IMR-90 (cell line): ENCODE measurements at regions of chr11 and their contacts with region 1.

Region 1: DNA sequence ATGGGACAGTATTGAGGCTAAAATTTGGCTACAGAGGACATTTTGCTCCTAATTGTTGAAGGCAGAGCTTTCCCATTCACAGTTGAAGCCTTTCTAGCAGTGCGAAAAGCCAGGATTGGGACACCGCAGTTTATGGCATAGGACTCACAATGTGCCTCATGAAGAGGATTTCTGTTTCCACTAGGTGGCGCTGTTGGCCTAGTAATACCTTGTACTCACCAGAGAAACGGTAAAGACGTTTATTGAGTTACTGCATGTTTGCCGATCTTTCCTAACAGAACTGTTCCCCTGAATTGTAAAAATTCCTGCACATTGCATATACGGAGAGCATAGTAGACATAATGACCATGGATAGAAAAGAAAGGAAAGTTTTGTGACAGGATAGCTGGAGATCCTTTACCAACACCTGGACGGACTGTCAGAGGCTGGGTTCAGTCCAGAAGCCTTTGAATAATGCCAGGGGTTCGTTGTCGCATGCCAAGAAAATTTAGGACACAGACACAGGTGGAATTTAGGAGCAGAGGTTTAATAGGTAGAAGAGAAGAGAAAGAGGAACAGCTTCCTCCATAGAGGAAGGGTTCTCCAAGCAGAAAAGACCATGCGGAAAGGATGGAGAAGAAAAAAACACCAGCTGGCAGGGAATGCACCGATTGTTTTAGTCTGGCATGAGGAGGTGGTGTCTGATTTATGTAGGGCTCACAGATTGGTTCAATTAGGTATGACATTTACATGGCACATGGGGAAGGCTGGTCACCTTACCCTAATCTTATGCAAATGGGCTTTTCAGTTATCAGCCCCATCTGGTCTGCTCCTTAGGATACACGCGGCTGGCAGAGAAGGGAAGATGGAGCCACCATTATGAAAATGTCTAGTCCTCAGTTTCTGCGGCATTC is 10.8 kb upstream of the OR51D1 start:
- DNase-seq: peak; percentile 79
- ATAC-seq: peak; percentile 90
- H3K4me3 ChIP-seq: no peak overlapping the region
- H3K27ac ChIP-seq: no peak overlapping the region
- H3K4me1 ChIP-seq: no peaks in the 10 kb centered on the region
- H3K27me3 ChIP-seq: peaks cover 2% of the 10 kb centered on the region; the same call in 1 of the 2 replicates
- CTCF ChIP-seq: peak; percentile 82
- POLR2A ChIP-seq: 0 out of 2 replicates have a peak, but pooled peaks have one; percentile 21
- RAD21 ChIP-seq: peak; percentile 92

Region 2: GRCh38 chr11:4187055-4187988 is 439.1 kb before region 1 on chr11:
- CTCF ChIA-PET with region 1: no interaction called
- POLR2A ChIA-PET with region 1: no interaction called
- dilution Hi-C with region 1: no loop called
- in situ Hi-C with region 1: no loop called
- intact Hi-C with region 1: loop called (anchors 1 kb)
- DNase-seq: peak; percentile 70
- ATAC-seq: peak; percentile 98
- H3K4me3 ChIP-seq: peak overlapping the region; percentile 50
- H3K27ac ChIP-seq: peak overlapping the region; percentile 24; the same call in 1 of the 2 replicates
- H3K4me1 ChIP-seq: no peaks in the 10 kb centered on the region; the same call in 1 of the 2 replicates
- H3K27me3 ChIP-seq: no peaks in the 10 kb centered on the region; the same call in 1 of the 2 replicates
- CTCF ChIP-seq: peak; percentile 97
- POLR2A ChIP-seq: peak; percentile 40; the same call in 1 of the 2 replicates
- RAD21 ChIP-seq: peak; percentile 91

Region 3: DNA sequence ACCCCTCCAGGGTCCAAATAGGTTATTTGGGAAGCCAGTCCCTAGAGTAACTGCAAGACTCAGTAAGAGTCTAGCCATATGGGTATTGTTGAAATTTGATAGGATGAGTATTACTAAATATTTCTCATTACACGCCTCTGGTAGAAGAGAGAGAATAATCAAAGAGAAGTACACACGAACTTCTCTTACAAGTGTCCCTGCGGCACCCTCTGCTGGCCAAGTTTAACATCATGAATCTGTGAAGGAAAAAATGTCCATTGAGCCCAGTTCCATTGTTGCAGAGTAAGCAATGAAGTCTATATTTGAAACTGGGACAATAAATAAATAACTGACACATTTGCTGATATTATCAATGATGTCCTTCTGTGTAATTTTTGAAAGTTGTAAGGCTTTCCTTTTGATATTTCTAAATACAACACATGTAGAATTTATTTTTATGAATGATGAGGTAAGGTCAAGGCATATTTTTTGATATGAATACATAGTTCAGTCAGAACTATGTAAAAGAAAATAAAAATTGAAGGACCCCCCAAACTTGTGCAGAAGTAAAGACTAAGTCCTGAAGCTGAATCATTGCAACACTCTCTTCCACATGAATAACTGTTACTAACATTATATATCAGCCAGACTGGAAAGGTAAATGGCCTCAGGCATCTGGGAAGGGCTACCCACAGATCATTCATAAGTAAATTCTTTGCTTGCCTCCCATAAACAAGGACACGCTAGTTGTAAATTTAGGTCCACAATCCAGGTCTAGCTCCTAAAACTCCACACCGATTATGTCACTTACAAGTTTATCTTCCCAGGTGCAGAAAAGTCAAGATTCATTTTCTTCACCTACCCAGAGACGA is 378.2 kb after region 1 on chr11:
- CTCF ChIA-PET with region 1: no interaction called
- POLR2A ChIA-PET with region 1: no interaction called
- dilution Hi-C with region 1: no loop called
- in situ Hi-C with region 1: no loop called
- intact Hi-C with region 1: loop called (anchors 1 kb)
- DNase-seq: peak; percentile 61
- ATAC-seq: peak; percentile 73
- H3K4me3 ChIP-seq: no peak overlapping the region
- H3K27ac ChIP-seq: no peak overlapping the region
- H3K4me1 ChIP-seq: no peaks in the 10 kb centered on the region
- H3K27me3 ChIP-seq: no peaks in the 10 kb centered on the region; the same call in 1 of the 2 replicates
- CTCF ChIP-seq: peak; percentile 78
- POLR2A ChIP-seq: no peak
- RAD21 ChIP-seq: peak; percentile 80

Region 4: GRCh38 chr11:5123802-5124521 is 497.5 kb after region 1 on chr11:
- CTCF ChIA-PET with region 1: no interaction called
- POLR2A ChIA-PET with region 1: no interaction called
- dilution Hi-C with region 1: no loop called
- in situ Hi-C with region 1: no loop called
- intact Hi-C with region 1: loop called (anchors 2 kb)
- DNase-seq: peak; percentile 76
- ATAC-seq: peak; percentile 100
- H3K4me3 ChIP-seq: no peak overlapping the region
- H3K27ac ChIP-seq: no peak overlapping the region
- H3K4me1 ChIP-seq: no peaks in the 10 kb centered on the region
- H3K27me3 ChIP-seq: no peaks in the 10 kb centered on the region
- CTCF ChIP-seq: peak; percentile 94
- POLR2A ChIP-seq: no peak
- RAD21 ChIP-seq: peak; percentile 91

Region 5: GRCh38 chr11:5380740-5381342 is 754.4 kb after region 1 on chr11:
- CTCF ChIA-PET with region 1: no interaction called
- POLR2A ChIA-PET with region 1: no interaction called
- dilution Hi-C with region 1: no loop called
- in situ Hi-C with region 1: loop called (anchors 10 kb)
- intact Hi-C with region 1: loop called (anchors 2 kb)
- DNase-seq: peak; percentile 77
- ATAC-seq: peak; percentile 100
- H3K4me3 ChIP-seq: no peak overlapping the region
- H3K27ac ChIP-seq: no peak overlapping the region
- H3K4me1 ChIP-seq: no peaks in the 10 kb centered on the region
- H3K27me3 ChIP-seq: no peaks in the 10 kb centered on the region
- CTCF ChIP-seq: peak; percentile 89
- POLR2A ChIP-seq: 0 out of 2 replicates have a peak, but pooled peaks have one; percentile 34
- RAD21 ChIP-seq: peak; percentile 98

Region 6: DNA sequence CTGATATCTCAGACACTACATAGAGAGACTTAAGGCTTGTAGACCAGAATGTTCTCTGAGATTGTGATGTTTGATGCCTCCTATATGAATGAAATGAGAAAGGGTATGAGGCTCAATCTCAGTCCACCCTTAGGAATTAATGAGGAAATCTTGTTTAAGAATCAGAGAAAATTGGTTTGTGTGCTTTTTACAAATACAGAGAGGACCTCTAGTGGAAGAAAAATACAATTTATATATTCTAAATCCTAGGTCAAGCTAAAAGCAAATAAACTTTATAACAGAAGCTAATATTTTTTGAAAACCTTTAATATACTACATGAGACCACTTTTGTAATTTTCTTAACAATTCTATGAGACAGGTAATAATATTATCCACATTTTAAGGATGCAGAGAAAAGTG is 926.9 kb after region 1 on chr11:
- CTCF ChIA-PET with region 1: no interaction called
- POLR2A ChIA-PET with region 1: no interaction called
- dilution Hi-C with region 1: no loop called
- in situ Hi-C with region 1: no loop called
- intact Hi-C with region 1: loop called (anchors 1 kb)
- DNase-seq: peak; percentile 10
- ATAC-seq: no peak; the same call in 1 of the 2 replicates
- H3K4me3 ChIP-seq: no peak overlapping the region
- H3K27ac ChIP-seq: no peak overlapping the region
- H3K4me1 ChIP-seq: no peaks in the 10 kb centered on the region
- H3K27me3 ChIP-seq: no peaks in the 10 kb centered on the region; the same call in 1 of the 2 replicates
- CTCF ChIP-seq: peak; percentile 38; the same call in 1 of the 2 replicates
- POLR2A ChIP-seq: no peak
- RAD21 ChIP-seq: peak; percentile 37

Region 7: DNA sequence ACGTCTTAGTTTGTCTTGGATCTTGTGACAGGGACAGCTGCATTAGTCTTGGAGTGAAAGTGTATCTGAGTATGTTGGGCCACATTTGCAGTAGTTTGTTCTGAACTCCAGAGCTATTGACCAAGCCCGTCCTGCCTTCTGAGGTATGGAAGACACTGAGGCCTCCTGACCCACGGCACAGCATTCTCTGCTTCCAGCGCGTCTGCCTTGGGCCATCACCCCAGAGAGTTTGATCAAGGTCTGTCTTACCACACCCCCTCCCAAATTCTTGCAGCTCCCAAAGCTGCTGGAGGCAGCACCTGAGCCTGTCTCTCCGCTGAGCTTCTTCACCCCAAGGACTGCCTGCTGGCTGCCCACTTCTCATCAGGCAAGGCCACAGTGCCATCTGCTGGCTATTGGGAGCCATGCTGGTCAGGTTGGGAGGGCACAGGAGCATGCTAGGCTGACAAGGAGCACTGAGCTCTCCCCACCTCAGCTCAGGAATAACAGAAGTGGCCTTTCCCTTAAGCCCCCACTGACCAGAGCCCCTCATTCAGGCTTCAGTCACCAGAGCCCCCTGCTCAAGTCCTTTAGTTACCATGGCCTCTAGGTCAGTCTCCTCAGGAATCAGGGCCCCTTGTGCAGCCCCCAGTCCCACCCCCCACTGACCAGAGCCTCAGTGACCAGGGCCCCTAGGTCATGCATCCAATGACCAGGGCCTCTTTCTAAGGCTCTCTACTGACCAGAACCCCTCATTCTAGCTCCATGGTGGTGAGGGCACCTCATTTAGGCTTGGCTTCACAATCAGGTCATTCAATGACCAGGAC is 1736.6 kb after region 1 on chr11:
- CTCF ChIA-PET with region 1: no interaction called
- POLR2A ChIA-PET with region 1: no interaction called
- dilution Hi-C with region 1: no loop called
- in situ Hi-C with region 1: no loop called
- intact Hi-C with region 1: loop called (anchors 10 kb)
- DNase-seq: peak; percentile 77
- ATAC-seq: peak; percentile 99
- H3K4me3 ChIP-seq: no peak overlapping the region
- H3K27ac ChIP-seq: no peak overlapping the region
- H3K4me1 ChIP-seq: 0 out of 2 replicates have a peak, but pooled peaks cover 2% of the 10 kb centered on the region
- H3K27me3 ChIP-seq: peaks cover 3% of the 10 kb centered on the region
- CTCF ChIP-seq: peak; percentile 96
- POLR2A ChIP-seq: no peak
- RAD21 ChIP-seq: peak; percentile 93